ENCODE measurements at regions of chr16 and their contacts with region 1.

Region 1: GRCh38 chr16:85479972-85480751 is 133.0 kb upstream of the GSE1 start:
- DNase-seq: peak; percentile 49
- ATAC-seq: peak; percentile 68
- H3K4me3 Mint-ChIP-seq: no peak overlapping the region
- H3K27ac Mint-ChIP-seq: no peak overlapping the region
- H3K4me1 Mint-ChIP-seq: peaks cover 15% of the 10 kb centered on the region
- H3K27me3 Mint-ChIP-seq: peaks cover 15% of the 10 kb centered on the region
- CTCF ChIP-seq: no peak

Region 2: GRCh38 chr16:85428168-85428898 is 51.8 kb before region 1 on chr16:
- CTCF ChIA-PET with region 1: no interaction called
- POLR2A ChIA-PET with region 1: no interaction called
- intact Hi-C with region 1: loop called (anchors 2 kb)
- DNase-seq: peak; percentile 40
- ATAC-seq: peak; percentile 76
- H3K4me3 Mint-ChIP-seq: no peak overlapping the region
- H3K27ac Mint-ChIP-seq: no peak overlapping the region
- H3K4me1 Mint-ChIP-seq: no peaks in the 10 kb centered on the region
- H3K27me3 Mint-ChIP-seq: peaks cover 20% of the 10 kb centered on the region
- CTCF ChIP-seq: no peak

Measured in activated B cell treated with CpG ODN at 0.5 μM for 24 hours (primary cell).